ENCODE measurements at regions of chr17 and their contacts with region 1.

Region 1: GRCh38 chr17:38485146-38485468 is 56.8 kb downstream of the ARHGAP23 start:
- ATAC-seq: no peak
- H3K4me3 ChIP-seq: no peak overlapping the region
- H3K27ac ChIP-seq: no peak overlapping the region
- H3K4me1 ChIP-seq: peaks cover 0 to 6% of the 10 kb centered on the region in 2 donors

Region 2: GRCh38 chr17:38444151-38444550 is 41.0 kb before region 1 on chr17:
- in situ Hi-C with region 1: loop called in 1 of 9 experiments (anchors 5 kb)
- ATAC-seq: peak; percentile 79 to 99 (median 92)
- H3K4me3 ChIP-seq: no peak overlapping the region
- H3K27ac ChIP-seq: no peak overlapping the region
- H3K4me1 ChIP-seq: peaks cover 6 to 14% of the 10 kb centered on the region in 2 donors

Region 3: GRCh38 chr17:38674749-38675615 is 189.9 kb after region 1 on chr17 and contains the start of gene EPOP:
- in situ Hi-C with region 1: no loop called
- ATAC-seq: peak; percentile 84 to 90 (median 86)
- H3K4me3 ChIP-seq: peak within 1 kb of the TSS; percentile 32 to 48 (median 42)
- H3K27ac ChIP-seq: no peak within 1 kb of the TSS
- H3K4me1 ChIP-seq: peaks cover 3 to 9% of the 10 kb centered on the region in 2 donors
- total RNA-seq, gene EPOP: 0.60 to 8.8 (median 1.4) TPM